PC-3 (cell line): ENCODE measurements at regions of chr11 and their contacts with region 1.

Region 1: GRCh38 chr11:17978553-17979287 is 34.1 kb downstream of the SERGEF start:
- DNase-seq: peak; percentile 67
- ATAC-seq: peak; percentile 97
- H3K4me3 ChIP-seq: no peak overlapping the region
- H3K27ac ChIP-seq: no peak overlapping the region
- H3K4me1 ChIP-seq: no peaks in the 10 kb centered on the region
- H3K27me3 ChIP-seq: no peaks in the 10 kb centered on the region
- CTCF ChIP-seq: peak; percentile 84

Region 2: DNA sequence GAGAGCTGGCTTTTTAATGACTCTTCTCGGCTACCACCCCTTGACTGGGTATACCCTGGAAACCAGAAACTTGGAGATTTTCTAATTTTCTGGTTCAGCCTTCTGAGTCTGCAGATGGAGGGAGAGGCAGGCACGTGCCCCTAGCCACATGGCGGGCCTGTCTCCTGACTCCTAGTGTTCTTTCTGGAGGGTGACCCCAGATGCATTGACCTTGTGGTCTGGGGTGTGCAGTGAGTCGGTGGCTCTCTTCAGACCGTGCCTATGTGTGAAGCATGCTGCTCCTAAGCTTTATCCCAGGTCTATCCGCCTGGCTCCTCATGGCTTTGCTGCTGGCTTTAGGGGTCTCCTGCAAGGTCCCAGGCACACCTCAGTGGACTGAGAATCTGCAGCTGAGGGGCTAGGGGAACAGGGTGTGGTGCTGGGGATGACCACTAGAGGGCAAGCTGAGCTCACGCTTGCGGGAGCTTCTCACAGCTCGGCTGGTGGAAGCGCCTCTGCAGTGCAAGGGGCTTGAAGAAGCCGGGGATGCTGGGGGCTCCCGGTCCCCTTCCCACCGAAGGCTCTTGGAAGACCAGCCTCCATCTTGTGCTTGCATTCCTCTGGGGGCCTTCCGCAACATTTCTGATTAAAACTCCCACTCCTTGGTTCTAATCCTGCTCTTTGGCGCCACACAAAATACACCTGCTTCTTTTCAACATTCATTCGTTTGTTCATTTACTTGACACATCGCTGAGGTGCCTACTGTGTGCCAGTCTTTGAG is 379.8 kb before region 1 on chr11:
- CTCF ChIA-PET with region 1: no interaction called
- POLR2A ChIA-PET with region 1: no interaction called
- intact Hi-C with region 1: loop called (anchors 5 kb)
- DNase-seq: peak; percentile 78
- ATAC-seq: peak; percentile 89
- H3K4me3 ChIP-seq: no peak overlapping the region
- H3K27ac ChIP-seq: no peak overlapping the region
- H3K4me1 ChIP-seq: no peaks in the 10 kb centered on the region
- H3K27me3 ChIP-seq: peaks cover 8% of the 10 kb centered on the region; the same call in 1 of the 2 replicates
- CTCF ChIP-seq: peak; percentile 90

Region 3: GRCh38 chr11:17760102-17761029 is 218.4 kb before region 1 on chr11:
- CTCF ChIA-PET with region 1: interaction called, 3 read pairs
- POLR2A ChIA-PET with region 1: no interaction called
- intact Hi-C with region 1: loop called (anchors 1 kb)
- DNase-seq: peak; percentile 64
- ATAC-seq: peak; percentile 96
- H3K4me3 ChIP-seq: peak overlapping the region; percentile 31; the same call in 1 of the 2 replicates
- H3K27ac ChIP-seq: no peak overlapping the region
- H3K4me1 ChIP-seq: 0 out of 2 replicates have a peak, but pooled peaks cover 3% of the 10 kb centered on the region
- H3K27me3 ChIP-seq: no peaks in the 10 kb centered on the region
- CTCF ChIP-seq: peak; percentile 81

Region 4: DNA sequence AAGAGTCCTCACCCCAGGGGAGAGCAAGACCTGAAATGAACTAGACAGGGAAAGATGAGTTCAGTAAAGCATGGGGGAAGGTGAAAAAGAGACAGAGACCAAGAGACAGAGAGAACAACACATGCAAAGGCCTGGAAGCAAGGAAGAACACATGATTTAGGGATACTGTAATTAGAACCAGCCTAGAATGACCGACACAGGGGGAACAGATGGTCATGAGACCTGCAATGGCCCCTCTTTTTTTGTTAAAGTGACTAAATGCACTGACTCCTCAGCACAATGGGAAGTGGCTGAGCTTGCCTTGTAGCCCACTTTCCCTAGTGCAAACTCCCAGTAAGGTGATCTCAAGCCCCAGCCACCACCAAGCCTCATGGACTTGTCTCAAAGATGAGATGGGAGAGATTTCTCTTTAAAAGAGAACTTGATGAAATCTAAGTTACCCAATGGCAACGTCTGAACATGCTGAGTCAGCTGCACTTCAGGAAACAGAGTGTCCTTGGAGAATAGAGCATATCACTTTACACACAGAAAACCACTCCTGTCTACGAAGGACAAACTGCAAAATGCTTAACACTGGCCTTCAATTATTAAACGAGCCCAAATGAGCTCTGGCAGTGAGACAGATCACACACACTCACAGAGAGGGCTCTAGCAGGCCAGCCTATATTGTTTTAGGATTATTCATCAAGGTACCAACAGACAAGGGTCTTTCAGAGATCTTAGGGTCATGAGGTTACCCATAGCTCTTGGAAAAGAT is 56.9 kb before region 1 on chr11:
- CTCF ChIA-PET with region 1: no interaction called
- POLR2A ChIA-PET with region 1: no interaction called
- intact Hi-C with region 1: no loop called
- DNase-seq: no peak
- ATAC-seq: no peak
- H3K4me3 ChIP-seq: no peak overlapping the region
- H3K27ac ChIP-seq: no peak overlapping the region
- H3K4me1 ChIP-seq: no peaks in the 10 kb centered on the region
- H3K27me3 ChIP-seq: no peaks in the 10 kb centered on the region
- CTCF ChIP-seq: no peak

Region 5: DNA sequence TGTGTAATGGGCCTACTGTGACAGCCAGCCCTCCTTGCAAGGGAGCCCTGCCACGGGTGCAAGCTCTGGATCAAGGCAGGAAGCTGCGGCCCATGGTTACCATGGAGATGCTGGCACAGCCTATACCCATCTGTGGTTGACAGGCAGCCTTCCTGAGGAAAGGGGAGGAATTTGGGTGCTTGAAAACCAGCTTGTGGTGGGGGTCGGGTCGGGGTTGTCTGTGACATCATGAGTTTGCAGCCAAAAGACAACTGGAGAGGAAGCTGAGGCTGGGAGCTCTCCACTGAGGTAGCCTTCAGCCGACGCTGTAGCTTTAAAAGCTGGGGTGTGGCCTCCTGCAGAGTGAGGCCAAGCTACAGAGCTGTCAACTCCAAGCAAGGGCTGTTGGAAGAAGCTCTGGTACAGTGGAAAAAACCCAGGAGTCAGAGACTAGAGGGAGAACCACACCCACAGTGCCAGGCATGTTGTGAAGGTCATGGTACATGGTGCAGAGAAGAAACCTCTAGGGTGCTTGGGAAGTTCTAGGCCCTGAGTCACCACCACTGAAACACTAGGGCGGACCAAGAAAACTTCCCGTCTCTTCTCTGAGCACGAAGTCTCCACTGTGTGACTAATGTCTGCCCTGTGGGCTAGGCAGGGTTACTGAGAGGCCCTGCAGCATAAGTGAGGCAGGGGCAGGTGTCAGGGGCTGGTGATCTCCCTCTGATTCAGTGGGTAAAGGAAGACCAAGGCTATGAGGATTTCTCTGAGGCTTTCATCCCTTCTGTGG is 404.9 kb after region 1 on chr11:
- CTCF ChIA-PET with region 1: no interaction called
- POLR2A ChIA-PET with region 1: no interaction called
- intact Hi-C with region 1: loop called (anchors 10 kb)
- DNase-seq: peak; percentile 96
- ATAC-seq: peak; percentile 91
- H3K4me3 ChIP-seq: peak overlapping the region; percentile 50
- H3K27ac ChIP-seq: peak overlapping the region; percentile 99
- H3K4me1 ChIP-seq: peaks cover 22% of the 10 kb centered on the region
- H3K27me3 ChIP-seq: no peaks in the 10 kb centered on the region
- CTCF ChIP-seq: no peak